ENCODE measurements at regions of chr1 and their contacts with region 1.

Region 1: DNA sequence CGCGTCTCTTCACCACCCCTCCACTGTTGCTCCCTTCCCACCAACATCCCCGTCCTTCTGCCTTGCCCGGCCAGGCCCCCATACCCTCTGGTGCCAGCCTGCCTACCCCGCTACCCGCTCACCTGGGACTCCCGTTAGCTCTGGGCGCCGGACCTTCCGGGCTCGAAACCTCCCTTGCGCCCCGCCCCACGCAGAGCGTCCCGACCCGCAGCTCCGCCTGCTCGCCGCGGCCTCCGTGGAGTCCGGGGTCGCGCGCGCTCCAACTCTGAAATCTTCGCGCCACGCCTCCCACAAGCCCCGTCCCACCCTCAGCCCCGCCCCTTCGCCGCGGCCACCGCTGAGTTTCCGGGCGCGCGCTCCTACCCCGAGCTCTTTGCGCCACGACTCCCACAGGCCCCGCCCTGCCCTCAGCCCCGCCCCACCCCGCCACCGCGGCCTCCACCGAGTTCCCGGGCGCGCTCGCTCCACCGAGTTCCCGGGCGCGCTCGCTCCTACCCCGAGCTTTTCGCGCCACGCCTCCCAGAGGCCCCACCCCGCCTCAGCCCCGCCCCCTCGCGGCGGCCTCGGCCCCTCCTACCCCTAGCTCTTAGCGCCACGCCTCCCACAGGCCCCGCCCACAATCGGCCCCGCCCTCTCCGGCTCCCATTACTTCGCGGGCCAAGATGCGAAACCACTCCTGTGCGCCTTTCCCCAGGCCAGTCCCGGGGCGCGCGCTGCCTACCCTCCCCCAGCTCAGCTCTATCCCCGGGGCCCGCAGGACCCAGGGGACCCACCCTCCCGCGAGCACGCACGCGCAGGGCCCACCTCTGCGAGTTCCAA is at the start of gene IFT25:
- DNase-seq: peak; percentile 95
- CTCF ChIP-seq: no peak

Region 2: GRCh38 chr1:53799141-53799540 is 146.5 kb before region 1 on chr1:
- CTCF ChIA-PET with region 1: no interaction called
- POLR2A ChIA-PET with region 1: no interaction called
- DNase-seq: no peak
- CTCF ChIP-seq: no peak

Region 3: GRCh38 chr1:53878492-53879105 is 67.0 kb before region 1 on chr1:
- CTCF ChIA-PET with region 1: interaction called, 30 read pairs
- POLR2A ChIA-PET with region 1: no interaction called
- DNase-seq: peak; percentile 43
- CTCF ChIP-seq: peak; percentile 47

Region 4: DNA sequence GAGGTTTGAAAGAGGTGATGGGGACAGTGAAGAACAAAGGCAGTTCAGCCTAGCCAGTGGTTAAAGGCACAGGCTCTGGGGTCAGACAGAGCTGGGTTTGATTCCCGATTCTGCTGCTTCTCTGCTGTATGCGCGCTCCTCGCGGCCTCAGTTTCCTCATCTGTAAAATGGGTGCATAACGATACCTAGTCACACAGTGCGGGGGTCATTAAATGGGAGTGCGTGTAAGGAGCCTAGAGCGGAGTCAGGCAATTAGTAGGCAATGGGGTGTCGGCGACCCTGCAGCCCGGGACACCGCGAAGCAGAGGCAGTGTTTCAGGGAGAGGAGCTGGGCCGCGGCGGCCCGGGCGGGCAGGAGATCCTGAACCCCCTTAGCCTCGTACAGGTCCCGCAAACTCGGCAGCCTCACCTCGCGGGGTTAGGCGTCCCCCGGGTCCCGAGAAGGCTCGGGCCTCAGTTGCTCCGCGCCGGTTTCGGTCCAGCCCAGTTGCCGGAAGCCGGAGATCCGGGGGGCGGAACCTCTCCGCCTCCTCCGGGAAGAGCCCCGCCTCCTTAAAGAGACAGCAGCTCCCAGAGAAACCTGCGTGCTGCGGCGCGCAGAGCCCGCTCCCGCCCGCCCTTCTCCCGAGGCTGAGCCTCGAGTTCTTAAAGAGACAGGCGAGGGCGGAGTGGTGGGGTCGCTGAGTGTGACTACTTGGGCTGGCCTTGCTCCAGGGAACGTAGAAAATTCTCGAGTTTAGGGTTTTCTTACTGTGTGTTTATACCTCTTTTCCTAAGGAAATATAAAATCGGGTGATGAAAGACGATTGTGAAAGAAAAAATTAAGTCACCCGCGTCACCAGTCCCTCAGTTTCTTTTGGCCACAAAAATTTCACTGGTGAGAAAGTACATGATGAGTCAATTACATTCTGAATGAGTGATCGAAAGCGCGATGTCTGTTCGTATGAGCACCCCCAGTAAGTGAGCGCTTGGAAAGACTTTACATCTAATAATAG is 56.0 kb before region 1 on chr1 and contains the start of gene YIPF1:
- CTCF ChIA-PET with region 1: interaction called, 4 read pairs
- POLR2A ChIA-PET with region 1: interaction called, 21 read pairs
- DNase-seq: peak; percentile 93
- CTCF ChIP-seq: no peak

Region 5: DNA sequence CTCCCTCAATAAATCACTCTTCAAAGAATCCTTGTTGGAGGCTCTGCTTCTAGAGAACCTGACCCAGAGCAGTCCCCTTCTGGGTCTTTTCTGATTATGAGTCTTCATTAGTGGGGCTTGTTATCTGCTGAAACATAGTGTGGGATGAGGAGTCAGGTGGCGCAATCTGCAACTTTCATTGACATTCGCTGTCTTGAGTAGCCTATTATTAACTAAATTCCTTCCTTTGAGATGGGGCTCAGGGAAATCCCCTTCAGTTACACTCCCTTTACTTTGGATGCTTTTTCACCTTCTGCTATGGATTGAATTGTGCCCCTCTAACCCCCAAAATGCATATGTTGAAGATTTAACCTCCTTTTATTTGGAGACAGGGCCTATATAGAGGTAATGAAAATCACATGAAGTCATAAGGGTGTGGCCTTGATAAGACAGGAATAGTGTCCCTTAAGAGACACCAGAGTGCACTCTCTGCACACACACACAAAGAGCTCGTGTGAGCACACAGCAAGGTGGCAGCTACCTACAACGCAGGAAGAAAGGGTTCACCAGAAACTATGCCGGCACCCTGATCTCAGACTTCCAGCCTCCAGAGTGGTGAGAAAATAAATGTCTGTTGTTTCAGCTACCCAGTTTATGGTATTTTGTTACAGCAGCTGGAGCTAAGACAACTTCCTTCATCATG is 32.1 kb before region 1 on chr1:
- CTCF ChIA-PET with region 1: no interaction called
- POLR2A ChIA-PET with region 1: no interaction called
- DNase-seq: no peak
- CTCF ChIP-seq: no peak

Region 6: GRCh38 chr1:53929246-53929960 is 16.2 kb before region 1 on chr1:
- CTCF ChIA-PET with region 1: interaction called, 11 read pairs
- POLR2A ChIA-PET with region 1: interaction called, 4 read pairs
- DNase-seq: no peak
- CTCF ChIP-seq: no peak